ACHN (cell line): ENCODE measurements at regions of chr15 and their contacts with region 1.

Region 1: DNA sequence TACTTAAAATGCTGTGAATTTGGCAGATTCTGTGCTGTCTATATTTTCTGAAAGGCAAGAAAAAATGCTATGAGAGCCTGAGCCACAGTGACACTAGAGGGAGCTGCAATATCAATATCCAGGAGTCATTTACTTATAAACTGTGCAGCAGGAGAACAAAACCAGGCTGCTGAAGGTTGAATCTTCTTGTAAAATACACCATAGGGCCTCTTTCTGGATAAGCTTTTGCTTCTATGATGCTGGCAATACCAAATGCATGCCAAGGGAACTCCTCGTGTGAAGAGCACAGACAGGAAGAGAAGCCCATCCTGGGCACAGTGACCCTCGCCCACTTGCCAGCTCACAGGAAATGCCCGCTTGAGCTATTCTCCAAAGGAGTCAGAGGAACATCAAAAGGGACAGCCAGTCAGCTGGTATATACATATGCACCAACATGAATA is 48.0 kb upstream of the TSPAN3 start:
- DNase-seq: peak; percentile 68

Region 2: DNA sequence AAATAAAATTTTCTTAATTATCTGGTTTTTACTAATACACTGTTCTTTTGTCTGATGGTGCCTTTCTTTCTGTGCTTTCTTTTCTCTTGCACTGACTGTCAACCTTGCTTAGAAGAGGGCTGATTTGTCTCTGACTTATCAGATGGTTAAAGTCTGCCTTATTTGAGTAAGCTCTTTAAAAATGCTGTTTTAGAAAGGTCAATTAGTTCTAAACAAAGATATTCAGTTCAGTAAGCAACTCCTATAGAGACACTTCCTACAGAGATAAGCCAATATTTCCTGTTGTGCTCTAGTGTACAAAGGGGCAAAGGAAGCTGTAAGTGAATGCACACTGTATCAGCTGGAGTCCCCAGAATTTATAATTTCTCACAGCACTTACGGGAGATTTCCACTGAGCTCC is 105.5 kb after region 1 on chr15:
- in situ Hi-C with region 1: no loop called
- DNase-seq: no peak

Region 3: DNA sequence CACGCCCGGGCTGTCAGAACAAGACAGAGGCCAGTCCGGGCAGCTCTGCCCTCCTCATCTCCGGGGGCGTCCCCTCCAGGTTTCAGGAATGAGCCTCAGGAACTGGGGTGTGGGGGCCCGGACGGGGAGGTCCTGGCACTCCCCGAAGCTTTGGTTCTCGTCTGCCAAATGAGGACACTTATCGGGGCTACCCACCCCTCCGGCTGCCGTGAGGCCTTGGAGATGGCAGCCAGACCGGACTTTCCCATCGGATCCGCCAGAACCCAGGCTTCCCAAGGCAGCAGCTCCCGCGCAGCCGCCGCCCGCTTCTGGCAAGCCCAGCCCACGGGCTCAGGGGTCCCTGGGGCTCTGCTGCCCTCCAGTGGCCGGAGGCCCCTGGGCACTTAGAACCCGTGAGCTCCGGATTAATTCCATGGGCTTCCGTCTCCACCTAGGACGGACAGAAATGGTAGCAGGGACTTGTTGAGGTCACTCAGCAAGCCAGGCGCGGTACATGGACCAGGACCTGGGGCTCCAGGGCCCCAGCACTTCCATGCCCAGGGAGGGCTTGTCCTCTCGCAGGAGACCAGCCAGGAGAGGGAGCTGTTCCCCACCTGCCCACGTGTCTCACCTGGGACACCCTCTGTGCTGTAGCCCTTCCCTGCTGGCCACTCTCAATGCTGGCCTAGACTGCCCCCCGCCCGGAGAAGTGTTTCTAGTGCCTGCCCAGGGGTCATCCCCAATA is 424.4 kb after region 1 on chr15:
- in situ Hi-C with region 1: loop called (anchors 25 kb)
- DNase-seq: peak; percentile 79